ENCODE measurements at regions of chr2 and their contacts with region 1.

Region 1: DNA sequence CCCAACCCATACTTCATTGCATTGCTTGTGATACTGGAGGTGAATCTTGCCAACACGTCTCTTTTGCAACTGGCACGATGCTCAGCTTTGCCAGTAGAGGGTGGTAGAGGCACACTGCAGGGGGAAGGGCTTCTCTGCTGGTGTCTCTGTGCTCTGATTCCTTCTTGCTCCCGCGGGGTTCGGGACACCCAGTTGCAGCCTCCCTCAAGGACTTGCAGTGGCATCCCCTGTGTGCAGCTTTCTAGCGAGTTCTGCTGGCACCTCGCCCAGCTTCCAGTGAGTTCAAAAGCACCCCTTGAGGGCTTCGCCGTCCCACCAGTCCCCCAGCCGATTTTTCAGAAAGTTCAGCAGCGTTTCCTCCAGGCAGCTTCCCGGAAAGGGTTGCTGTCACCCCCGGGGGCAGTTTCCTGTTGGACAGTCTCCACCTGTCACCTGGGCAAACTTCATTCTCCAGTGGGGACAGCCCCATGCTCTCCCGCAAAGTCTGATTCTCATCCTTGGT is 35.3 kb upstream of the EN1 start:
- DNase-seq: peak; percentile 82
- H3K4me3 ChIP-seq: peak overlapping the region; percentile 39
- H3K27ac ChIP-seq: no peak overlapping the region
- H3K4me1 ChIP-seq: no peaks in the 10 kb centered on the region
- H3K27me3 ChIP-seq: no peaks in the 10 kb centered on the region
- CTCF ChIP-seq: peak; percentile 96

Region 2: DNA sequence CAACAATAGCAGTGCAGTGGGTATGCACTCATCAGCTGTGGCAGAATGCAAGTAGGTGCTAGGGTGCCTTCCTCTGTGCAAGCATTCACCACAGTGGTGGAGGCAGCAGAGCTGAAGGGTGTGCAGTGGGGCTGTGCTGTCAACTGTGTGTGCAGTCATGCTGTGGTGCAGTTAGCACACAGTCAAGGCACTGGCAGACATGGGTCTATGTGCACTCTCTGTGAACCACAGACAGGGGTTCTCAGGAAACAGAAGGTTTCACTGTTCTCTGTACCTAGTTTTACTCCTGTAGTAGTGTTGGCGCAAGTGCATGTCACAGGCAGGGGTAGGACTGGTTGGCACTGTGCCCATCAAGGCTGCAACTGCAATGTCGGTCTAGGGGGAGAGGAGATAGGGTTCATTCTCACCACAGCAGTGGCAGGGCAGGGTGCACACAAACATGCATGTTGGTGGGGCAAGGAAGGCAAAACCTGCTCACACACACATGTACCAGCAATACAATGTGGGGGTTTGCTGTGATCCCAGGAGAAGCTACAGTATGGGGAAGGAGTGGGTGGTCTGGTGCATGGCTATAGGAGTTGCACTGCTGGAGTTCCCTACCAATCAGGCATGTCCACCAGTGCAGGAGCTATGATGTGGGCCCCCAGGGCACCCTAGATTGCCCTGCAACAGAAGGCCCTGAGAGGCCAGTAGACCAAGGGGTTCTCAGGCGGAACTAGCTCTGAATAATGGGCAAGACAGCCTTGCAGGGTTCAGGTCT is 1311.0 kb before region 1 on chr2:
- CTCF ChIA-PET with region 1: no interaction called
- POLR2A ChIA-PET with region 1: no interaction called
- intact Hi-C with region 1: no loop called
- DNase-seq: no peak
- H3K4me3 ChIP-seq: no peak overlapping the region
- H3K27ac ChIP-seq: no peak overlapping the region
- H3K4me1 ChIP-seq: no peaks in the 10 kb centered on the region
- H3K27me3 ChIP-seq: no peaks in the 10 kb centered on the region
- CTCF ChIP-seq: no peak

Region 3: GRCh38 chr2:118709786-118710185 is 173.0 kb before region 1 on chr2:
- CTCF ChIA-PET with region 1: no interaction called
- POLR2A ChIA-PET with region 1: no interaction called
- intact Hi-C with region 1: no loop called
- DNase-seq: no peak
- H3K4me3 ChIP-seq: no peak overlapping the region
- H3K27ac ChIP-seq: no peak overlapping the region
- H3K4me1 ChIP-seq: no peaks in the 10 kb centered on the region
- H3K27me3 ChIP-seq: no peaks in the 10 kb centered on the region
- CTCF ChIP-seq: no peak

Region 4: DNA sequence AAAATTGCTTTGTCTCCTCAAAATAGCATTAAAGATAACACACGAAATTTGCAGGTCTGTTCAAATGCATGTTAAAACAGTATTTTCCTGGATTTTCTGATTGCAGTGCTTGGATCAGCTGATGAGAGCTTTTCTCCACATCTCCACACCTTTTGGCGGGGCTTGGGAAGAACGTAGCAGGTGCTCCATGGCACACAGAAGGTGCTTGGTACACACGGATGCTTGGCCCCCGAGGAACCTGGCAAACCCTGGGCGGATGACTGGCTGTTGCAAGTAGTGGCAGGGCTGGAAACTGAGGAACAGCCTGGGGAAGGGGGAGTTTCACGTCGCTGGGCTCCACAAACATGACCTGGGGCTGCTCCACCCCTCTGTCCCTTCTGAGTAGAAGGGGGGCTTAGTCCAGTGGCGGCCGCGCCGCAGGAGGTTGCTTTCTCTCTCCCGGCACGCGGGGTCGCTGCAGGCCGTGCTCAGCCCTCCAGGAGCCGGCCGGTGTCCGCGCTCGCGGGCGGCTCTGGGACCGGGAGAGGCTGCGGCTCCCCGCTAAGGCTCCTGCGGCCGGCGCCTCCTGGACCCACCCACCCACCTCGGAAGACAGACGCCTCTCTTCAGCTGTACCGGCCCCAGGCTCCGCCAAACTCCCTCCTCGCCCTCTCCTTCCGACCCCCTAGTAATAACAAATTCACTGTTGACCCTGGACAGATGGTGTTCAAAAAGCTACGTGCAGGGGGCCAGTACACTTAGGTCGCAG is 128.6 kb after region 1 on chr2:
- CTCF ChIA-PET with region 1: no interaction called
- POLR2A ChIA-PET with region 1: no interaction called
- intact Hi-C with region 1: loop called (anchors 5 kb)
- DNase-seq: peak; percentile 51
- H3K4me3 ChIP-seq: no peak overlapping the region
- H3K27ac ChIP-seq: no peak overlapping the region
- H3K4me1 ChIP-seq: peaks cover 10% of the 10 kb centered on the region
- H3K27me3 ChIP-seq: peaks cover 31% of the 10 kb centered on the region
- CTCF ChIP-seq: peak; percentile 57

Region 5: GRCh38 chr2:119040730-119041129 is 158.0 kb after region 1 on chr2:
- CTCF ChIA-PET with region 1: no interaction called
- POLR2A ChIA-PET with region 1: no interaction called
- intact Hi-C with region 1: no loop called
- DNase-seq: no peak
- H3K4me3 ChIP-seq: no peak overlapping the region
- H3K27ac ChIP-seq: no peak overlapping the region
- H3K4me1 ChIP-seq: no peaks in the 10 kb centered on the region
- H3K27me3 ChIP-seq: peaks cover 54% of the 10 kb centered on the region
- CTCF ChIP-seq: no peak

Region 6: GRCh38 chr2:119290859-119291587 is 408.3 kb after region 1 on chr2:
- CTCF ChIA-PET with region 1: no interaction called
- POLR2A ChIA-PET with region 1: no interaction called
- intact Hi-C with region 1: loop called (anchors 2 kb)
- DNase-seq: peak; percentile 75
- H3K4me3 ChIP-seq: no peak overlapping the region
- H3K27ac ChIP-seq: no peak overlapping the region
- H3K4me1 ChIP-seq: no peaks in the 10 kb centered on the region
- H3K27me3 ChIP-seq: no peaks in the 10 kb centered on the region
- CTCF ChIP-seq: peak; percentile 79

Region 7: GRCh38 chr2:119469661-119470297 is 587.0 kb after region 1 on chr2:
- CTCF ChIA-PET with region 1: no interaction called
- POLR2A ChIA-PET with region 1: no interaction called
- intact Hi-C with region 1: loop called (anchors 5 kb)
- DNase-seq: no peak
- H3K4me3 ChIP-seq: no peak overlapping the region
- H3K27ac ChIP-seq: no peak overlapping the region
- H3K4me1 ChIP-seq: no peaks in the 10 kb centered on the region
- H3K27me3 ChIP-seq: no peaks in the 10 kb centered on the region
- CTCF ChIP-seq: no peak

Region 8: GRCh38 chr2:119508756-119509155 is 626.0 kb after region 1 on chr2:
- CTCF ChIA-PET with region 1: no interaction called
- POLR2A ChIA-PET with region 1: no interaction called
- intact Hi-C with region 1: no loop called
- DNase-seq: no peak
- H3K4me3 ChIP-seq: no peak overlapping the region
- H3K27ac ChIP-seq: no peak overlapping the region
- H3K4me1 ChIP-seq: no peaks in the 10 kb centered on the region
- H3K27me3 ChIP-seq: no peaks in the 10 kb centered on the region
- CTCF ChIP-seq: no peak

Region 9: DNA sequence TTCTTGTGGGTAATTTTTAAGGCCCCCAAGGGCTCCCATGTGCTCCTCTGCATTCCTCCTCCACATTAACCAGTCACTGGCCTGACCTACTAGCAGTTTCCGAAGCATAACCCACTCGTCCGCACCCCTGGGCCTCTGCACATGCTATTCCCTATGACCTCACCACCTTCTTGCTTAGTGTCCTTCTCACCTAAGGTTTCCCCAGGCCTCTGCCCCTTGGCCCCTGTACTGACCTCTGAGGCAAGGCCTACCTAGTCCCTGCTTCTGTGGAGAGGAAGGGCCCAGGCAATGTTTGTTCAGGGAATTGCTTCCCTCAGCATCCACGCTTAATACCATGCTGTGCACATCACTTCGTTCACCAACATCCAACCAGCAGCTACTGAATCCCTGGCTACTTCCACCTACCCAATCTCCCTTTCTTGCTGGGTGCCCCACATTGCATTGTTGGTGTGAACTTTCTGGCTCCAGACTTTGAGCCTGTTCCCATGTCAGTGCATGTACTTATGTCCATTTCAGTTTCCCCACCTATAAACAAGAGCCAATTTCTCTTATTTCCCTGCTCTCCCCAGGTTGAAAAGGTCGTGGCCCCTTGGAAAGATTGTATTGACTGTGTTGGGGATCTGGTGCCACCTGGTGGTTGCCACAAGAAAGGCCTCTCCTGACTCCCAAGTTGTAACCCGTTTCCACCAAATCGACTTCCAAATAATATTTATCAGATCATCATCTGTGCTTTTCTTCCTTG is 777.0 kb after region 1 on chr2:
- CTCF ChIA-PET with region 1: no interaction called
- POLR2A ChIA-PET with region 1: no interaction called
- intact Hi-C with region 1: loop called (anchors 10 kb)
- DNase-seq: peak; percentile 54
- H3K4me3 ChIP-seq: no peak overlapping the region
- H3K27ac ChIP-seq: no peak overlapping the region
- H3K4me1 ChIP-seq: no peaks in the 10 kb centered on the region
- H3K27me3 ChIP-seq: no peaks in the 10 kb centered on the region
- CTCF ChIP-seq: peak; percentile 92

Measured in A673 (cell line).